Caco-2 (cell line): ENCODE measurements at regions of chr5 and their contacts with region 1.

Region 1: DNA sequence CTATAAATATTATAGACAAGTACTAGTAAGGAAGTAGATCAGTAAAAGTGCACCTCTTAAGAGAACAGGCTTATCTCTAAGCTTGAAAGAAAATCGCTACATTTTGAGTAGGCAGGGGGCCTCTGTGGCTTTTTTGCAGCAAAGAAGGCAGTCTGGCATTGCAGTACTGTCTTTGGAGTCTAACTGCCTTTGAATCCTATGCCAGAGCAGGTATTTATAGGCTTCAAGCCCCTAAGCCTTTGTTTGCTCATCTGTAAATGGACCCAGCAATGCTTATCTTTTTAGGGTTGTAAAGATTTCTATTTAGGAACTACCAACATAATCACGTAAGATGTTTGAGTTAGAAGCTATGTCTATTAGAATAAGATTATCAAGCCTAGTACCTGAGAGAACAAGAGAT is 23.7 kb upstream of the HK3 start:
- DNase-seq: peak; percentile 58 to 68
- H3K4me3 ChIP-seq: no peak overlapping the region
- H3K4me3 Mint-ChIP-seq: no peak overlapping the region
- H3K27ac Mint-ChIP-seq: peak overlapping the region; percentile 16
- H3K4me1 ChIP-seq: peaks cover 18% of the 10 kb centered on the region
- H3K4me1 Mint-ChIP-seq: peaks cover 25% of the 10 kb centered on the region
- H3K27me3 ChIP-seq: no peaks in the 10 kb centered on the region
- H3K27me3 Mint-ChIP-seq: no peaks in the 10 kb centered on the region
- CTCF ChIP-seq: peak in 1 of 2 experiments; percentile 7

Region 2: GRCh38 chr5:176870110-176870593 is 52.7 kb before region 1 on chr5:
- CTCF ChIA-PET with region 1: no interaction called
- POLR2A ChIA-PET with region 1: no interaction called
- intact Hi-C with region 1: no loop called
- DNase-seq: peak; percentile 71 to 72
- H3K4me3 ChIP-seq: no peak overlapping the region
- H3K4me3 Mint-ChIP-seq: no peak overlapping the region
- H3K27ac Mint-ChIP-seq: no peak overlapping the region
- H3K4me1 ChIP-seq: 0 out of 2 replicates have a peak, but pooled peaks cover 4% of the 10 kb centered on the region
- H3K4me1 Mint-ChIP-seq: peaks cover 15% of the 10 kb centered on the region
- H3K27me3 ChIP-seq: no peaks in the 10 kb centered on the region
- H3K27me3 Mint-ChIP-seq: peaks cover 13% of the 10 kb centered on the region
- CTCF ChIP-seq: peak; percentile 51 to 61

Region 3: GRCh38 chr5:176934309-176934930 is 11.6 kb after region 1 on chr5:
- CTCF ChIA-PET with region 1: no interaction called
- POLR2A ChIA-PET with region 1: no interaction called
- intact Hi-C with region 1: loop called (anchors 1 kb)
- DNase-seq: no peak
- H3K4me3 ChIP-seq: no peak overlapping the region
- H3K4me3 Mint-ChIP-seq: no peak overlapping the region
- H3K27ac Mint-ChIP-seq: no peak overlapping the region
- H3K4me1 ChIP-seq: peaks cover 21% of the 10 kb centered on the region
- H3K4me1 Mint-ChIP-seq: peaks cover 41% of the 10 kb centered on the region
- H3K27me3 ChIP-seq: no peaks in the 10 kb centered on the region
- H3K27me3 Mint-ChIP-seq: no peaks in the 10 kb centered on the region
- CTCF ChIP-seq: no peak